Uterus (tissue), 4 donors: ENCODE measurements at regions of chr9 and their contacts with region 1.

Region 1: GRCh38 chr9:89602978-89603766 is 1.6 kb upstream of the GADD45G start:
- DNase-seq: peak; percentile 90
- H3K4me3 ChIP-seq: peak overlapping the region; percentile 60 to 86
- H3K27ac ChIP-seq: peak overlapping the region; percentile 72 to 73
- H3K4me1 ChIP-seq: peaks cover 0 to 10% of the 10 kb centered on the region in 2 donors
- H3K27me3 ChIP-seq: no peaks in the 10 kb centered on the region
- CTCF ChIP-seq: peak; percentile 84 to 95 (median 89)
- POLR2A ChIP-seq: no peak

Region 2: GRCh38 chr9:89657765-89658164 is 54.6 kb after region 1 on chr9:
- intact Hi-C with region 1: loop called (anchors 10 kb)
- DNase-seq: no peak
- H3K4me3 ChIP-seq: no peak overlapping the region
- H3K27ac ChIP-seq: no peak overlapping the region
- H3K4me1 ChIP-seq: peaks cover 10 to 26% of the 10 kb centered on the region in 2 donors
- H3K27me3 ChIP-seq: no peaks in the 10 kb centered on the region
- CTCF ChIP-seq: no peak
- POLR2A ChIP-seq: no peak